ENCODE measurements at regions of chr22 and their contacts with region 1.

Region 1: DNA sequence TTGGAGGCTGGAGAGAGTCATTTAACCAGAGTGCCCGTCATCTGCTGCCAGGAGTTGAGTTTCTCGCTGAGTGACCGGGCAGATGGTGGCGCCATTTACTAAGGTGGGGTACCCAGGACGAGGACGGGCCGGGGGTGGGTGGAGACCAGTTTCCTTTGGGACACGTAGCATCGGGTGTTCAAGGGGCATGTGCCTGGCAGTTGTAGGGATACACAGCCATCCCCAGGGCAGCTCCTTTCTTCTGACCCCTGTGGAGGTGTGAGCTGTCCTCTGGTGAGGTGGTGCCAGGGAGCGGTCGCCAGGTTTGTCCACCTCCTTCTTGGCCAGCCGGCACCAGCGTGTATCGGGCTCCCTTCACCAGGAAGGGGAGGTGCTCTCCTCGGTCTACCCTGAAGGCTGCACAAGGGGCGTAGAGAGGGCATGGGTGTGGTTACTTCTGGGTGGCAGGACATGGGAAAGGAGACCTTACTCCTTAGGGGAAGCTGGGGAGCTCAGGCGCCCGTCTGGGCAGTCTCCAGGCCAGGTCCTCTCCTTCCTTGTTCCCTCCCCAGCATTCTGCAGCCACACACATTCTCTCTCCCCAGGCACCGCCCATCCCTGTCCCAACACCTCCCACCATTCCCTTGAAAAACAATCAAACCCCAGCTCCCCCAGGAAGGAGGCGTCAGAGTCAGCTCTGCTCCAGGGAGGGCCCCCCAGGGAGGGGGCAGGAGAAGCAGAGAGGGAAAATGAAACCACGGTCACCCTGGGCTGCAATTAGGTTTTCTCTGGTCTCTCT is 10.3 kb upstream of the MB start:
- DNase-seq: peak; percentile 74
- CTCF ChIP-seq: peak; percentile 76

Region 2: GRCh38 chr22:35517769-35518530 is 109.5 kb before region 1 on chr22:
- CTCF ChIA-PET with region 1: no interaction called
- POLR2A ChIA-PET with region 1: no interaction called
- DNase-seq: no peak
- CTCF ChIP-seq: no peak

Region 3: DNA sequence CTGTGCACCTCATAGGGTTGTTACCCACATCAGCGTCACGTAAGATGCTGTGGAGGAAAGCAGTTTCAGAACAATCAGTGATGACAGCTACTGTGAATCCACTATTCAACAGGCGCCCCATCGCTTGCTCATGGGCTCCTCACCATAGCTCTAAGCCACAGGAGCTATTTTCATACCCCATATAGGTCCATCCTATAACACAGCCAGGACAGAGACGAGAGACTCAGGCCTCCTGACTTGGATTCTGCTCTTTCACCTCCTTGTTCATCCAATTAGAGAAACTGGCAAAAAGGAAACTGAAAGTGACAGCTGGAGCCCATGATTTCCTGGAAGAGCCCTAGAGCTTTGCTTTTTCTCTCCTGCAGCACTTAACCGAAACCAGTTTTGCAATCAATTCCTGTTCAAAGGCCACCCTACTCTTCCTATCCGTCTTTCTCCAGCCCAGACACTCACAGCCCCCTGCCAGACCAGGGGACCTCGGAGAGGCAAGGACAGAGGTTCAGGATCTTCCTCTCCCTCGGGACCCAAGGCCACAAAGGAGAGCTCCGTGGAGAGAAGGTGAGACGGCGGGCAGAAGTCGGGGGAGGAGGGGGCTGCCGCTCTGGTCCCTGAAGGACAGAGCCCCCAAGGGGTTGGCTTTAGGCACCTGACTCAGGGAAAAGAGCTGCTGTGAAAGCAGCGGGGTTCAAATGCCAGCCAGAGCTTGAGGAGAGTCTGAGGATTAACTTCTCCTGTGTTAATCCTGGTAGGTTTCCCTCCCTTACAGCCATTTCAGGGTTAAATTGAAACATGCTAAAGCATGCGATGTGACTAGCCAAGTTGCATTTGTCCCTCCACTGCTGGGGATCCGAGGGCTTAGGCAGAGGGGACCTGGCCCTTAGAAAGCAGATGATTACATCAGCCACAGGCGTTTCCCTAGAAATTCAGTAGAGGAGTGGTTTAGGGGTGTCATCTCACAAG is 20.9 kb after region 1 on chr22 and contains the start of gene APOL6:
- CTCF ChIA-PET with region 1: interaction called, 10 read pairs
- POLR2A ChIA-PET with region 1: no interaction called
- DNase-seq: peak; percentile 59
- CTCF ChIP-seq: no peak

Region 4: DNA sequence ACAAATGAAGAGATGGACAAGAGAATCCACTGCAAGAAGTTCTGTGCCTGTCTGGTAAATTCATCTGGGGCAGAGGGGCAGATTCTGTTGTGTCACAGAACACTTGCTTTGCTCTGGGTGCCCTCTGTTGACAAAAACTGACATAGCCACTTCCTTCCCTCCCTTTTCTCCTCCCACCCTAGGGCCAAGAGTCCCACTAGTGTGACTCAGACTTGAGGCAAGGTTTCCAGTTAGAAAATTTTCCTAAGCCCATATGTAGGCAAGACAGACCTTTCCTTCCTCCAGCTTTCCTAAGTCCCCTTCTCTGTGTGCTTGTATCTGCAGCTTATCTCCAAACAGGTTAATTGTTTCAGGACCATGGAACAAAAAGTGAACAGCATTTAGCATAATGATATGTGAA is 294.3 kb after region 1 on chr22:
- CTCF ChIA-PET with region 1: interaction called, 13 read pairs
- POLR2A ChIA-PET with region 1: no interaction called
- DNase-seq: peak; percentile 36
- CTCF ChIP-seq: peak; percentile 50